ENCODE measurements at regions of chr5 and their contacts with region 1.

Region 1: DNA sequence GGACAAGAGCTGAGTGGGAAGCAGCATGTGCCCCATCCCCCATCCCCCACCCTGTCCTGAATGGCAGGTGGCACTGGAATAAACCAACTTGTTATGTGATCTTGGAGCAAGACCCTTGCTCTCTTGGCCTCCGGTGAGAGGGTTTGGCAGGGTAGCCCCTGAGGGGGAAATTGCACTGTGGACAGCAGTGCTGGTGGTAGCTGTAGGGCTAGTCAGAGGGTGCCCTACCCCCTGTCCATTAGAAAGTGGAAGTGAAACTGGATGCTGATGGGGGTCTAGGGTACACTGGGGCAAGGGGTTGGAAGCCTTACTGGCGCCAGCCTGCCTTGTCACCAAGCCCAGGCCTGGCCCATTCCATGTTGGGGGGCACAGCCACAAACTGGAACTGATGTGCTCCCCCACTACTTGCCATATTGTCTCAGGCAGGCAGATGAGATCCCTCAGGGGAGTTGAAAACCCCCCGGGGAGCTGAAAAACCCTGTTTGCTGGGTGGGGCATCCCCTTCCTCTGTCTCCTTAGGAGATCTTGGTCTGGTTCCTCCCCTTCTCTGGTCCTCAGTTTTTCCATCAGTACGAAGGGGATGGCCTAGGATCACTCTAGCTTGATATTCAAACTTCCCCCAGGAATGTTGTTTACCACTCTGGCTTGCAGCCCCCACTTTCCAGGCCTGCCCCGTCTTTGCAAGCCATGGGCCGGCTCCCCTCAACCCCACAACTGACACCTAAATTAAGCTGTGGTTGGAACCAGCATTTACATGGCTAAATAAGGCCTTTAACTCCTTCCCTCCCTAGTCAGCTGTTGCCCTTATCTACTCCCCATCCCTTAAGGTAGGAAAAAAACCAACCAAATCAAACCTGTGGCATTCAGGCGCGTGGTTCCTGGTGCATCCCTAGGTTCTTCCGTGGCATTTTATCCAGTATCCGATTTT is 14.4 kb upstream of the SYNPO start:
- DNase-seq: peak; percentile 44
- ATAC-seq: no peak

Region 2: GRCh38 chr5:150458819-150459557 is 167.1 kb before region 1 on chr5:
- intact Hi-C with region 1: no loop called
- DNase-seq: peak; percentile 90
- ATAC-seq: peak; percentile 90

Region 3: DNA sequence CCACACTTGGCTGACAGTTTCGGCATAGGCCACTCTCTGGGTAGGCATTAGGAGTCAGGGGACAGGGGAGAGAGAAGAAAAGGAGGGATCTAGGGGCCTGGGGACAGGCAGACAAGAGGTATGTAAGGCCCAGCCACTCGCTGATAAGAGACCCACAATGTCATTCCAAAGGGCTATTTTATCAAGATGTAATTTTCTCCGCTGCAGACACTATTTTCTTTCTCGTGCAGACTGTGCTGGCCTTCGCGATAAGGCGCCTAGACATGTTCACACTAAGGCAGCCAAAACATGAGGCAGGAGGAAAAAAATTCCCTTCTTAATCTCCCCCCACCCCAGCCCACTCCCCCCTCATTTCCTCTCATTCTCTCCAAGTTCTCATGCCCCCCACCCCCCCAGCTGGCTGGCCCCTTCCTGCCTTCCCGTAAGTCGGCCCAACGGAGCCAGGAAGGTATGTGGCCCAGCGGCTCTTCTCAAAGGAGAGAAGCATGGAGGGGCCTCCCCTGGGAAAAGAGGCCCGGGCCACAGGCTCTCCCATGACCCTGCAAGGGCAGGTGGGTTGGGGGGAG is 30.5 kb before region 1 on chr5:
- intact Hi-C with region 1: loop called (anchors 2 kb)
- DNase-seq: peak; percentile 58
- ATAC-seq: no peak

Region 4: GRCh38 chr5:150640311-150641005 is 14.4 kb after region 1 on chr5 and contains the start of gene SYNPO:
- intact Hi-C with region 1: loop called (anchors 2 kb)
- DNase-seq: no peak
- ATAC-seq: peak; percentile 77
- total RNA-seq, gene SYNPO: 587 TPM

Region 5: GRCh38 chr5:150904479-150905318 is 278.6 kb after region 1 on chr5 and contains the start of gene ZNF300:
- intact Hi-C with region 1: no loop called
- DNase-seq: peak; percentile 89
- ATAC-seq: peak; percentile 100
- total RNA-seq, gene ZNF300: 0.76 TPM

Measured in Right ventricle myocardium inferior (tissue), 1 donor.